ENCODE measurements at regions of chr3 and their contacts with region 1.

Region 1: GRCh38 chr3:17023006-17023664 is 138.4 kb downstream of the PLCL2 start:
- DNase-seq: peak; percentile 61
- H3K4me3 Mint-ChIP-seq: peak overlapping the region; percentile 47
- H3K27ac Mint-ChIP-seq: peak overlapping the region; percentile 75
- H3K4me1 Mint-ChIP-seq: peaks cover 58% of the 10 kb centered on the region
- H3K27me3 Mint-ChIP-seq: no peaks in the 10 kb centered on the region

Region 2: DNA sequence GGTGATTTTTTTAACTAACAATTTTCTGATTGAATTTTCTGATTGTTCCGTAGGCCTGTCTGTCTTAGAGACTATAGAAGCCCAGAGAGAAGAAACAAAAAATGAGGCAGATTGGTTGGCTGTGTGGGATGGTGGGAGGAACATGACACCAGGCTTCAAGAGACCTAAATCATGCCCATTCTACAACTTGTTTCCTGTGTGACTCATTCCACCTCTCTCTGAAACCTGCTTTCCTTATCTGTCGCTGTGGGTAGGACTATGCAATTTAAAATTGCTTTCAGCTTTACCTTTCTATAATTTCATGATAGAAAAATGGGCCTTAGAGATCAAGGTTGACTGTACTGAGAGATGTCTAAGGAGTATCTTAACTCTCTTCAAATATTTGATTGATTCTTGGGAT is 713.6 kb before region 1 on chr3:
- intact Hi-C with region 1: loop called (anchors 10 kb)
- DNase-seq: peak; percentile 50
- H3K4me3 Mint-ChIP-seq: peak overlapping the region; percentile 72
- H3K27ac Mint-ChIP-seq: peak overlapping the region; percentile 92
- H3K4me1 Mint-ChIP-seq: peaks cover 84% of the 10 kb centered on the region
- H3K27me3 Mint-ChIP-seq: no peaks in the 10 kb centered on the region

Region 3: DNA sequence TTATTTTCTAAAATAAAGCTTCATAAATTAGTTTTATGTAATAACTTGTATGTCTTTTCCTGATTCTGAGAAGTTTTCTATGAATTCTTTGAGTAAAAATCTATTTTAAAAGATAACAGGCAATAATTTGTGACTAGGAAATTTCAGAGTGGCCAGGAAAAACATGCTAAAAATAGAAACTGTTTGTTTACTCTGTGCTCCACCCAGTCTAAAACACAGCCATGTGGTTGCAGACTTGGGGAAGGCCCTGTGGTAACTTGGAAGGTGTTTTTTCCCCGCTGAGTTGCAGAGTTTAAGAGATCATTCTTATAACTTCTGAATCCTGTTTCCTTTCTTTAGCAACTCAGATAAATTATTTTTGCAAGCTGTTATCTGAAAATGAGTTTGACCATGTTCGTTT is 116.5 kb before region 1 on chr3:
- intact Hi-C with region 1: loop called (anchors 5 kb)
- DNase-seq: no peak
- H3K4me3 Mint-ChIP-seq: peak overlapping the region; percentile 51
- H3K27ac Mint-ChIP-seq: no peak overlapping the region
- H3K4me1 Mint-ChIP-seq: peaks cover 76% of the 10 kb centered on the region
- H3K27me3 Mint-ChIP-seq: no peaks in the 10 kb centered on the region

Region 4: GRCh38 chr3:17077606-17078005 is 54.5 kb after region 1 on chr3:
- intact Hi-C with region 1: loop called (anchors 2 kb)
- DNase-seq: no peak
- H3K4me3 Mint-ChIP-seq: no peak overlapping the region
- H3K27ac Mint-ChIP-seq: peak overlapping the region; percentile 73
- H3K4me1 Mint-ChIP-seq: peaks cover 68% of the 10 kb centered on the region
- H3K27me3 Mint-ChIP-seq: no peaks in the 10 kb centered on the region

Region 5: GRCh38 chr3:17179381-17180210 is 156.5 kb after region 1 on chr3:
- intact Hi-C with region 1: loop called (anchors 1 kb)
- DNase-seq: no peak
- H3K4me3 Mint-ChIP-seq: no peak overlapping the region
- H3K27ac Mint-ChIP-seq: no peak overlapping the region
- H3K4me1 Mint-ChIP-seq: peaks cover 44% of the 10 kb centered on the region
- H3K27me3 Mint-ChIP-seq: peaks cover 12% of the 10 kb centered on the region